Mammary epithelial cell (primary cell): ENCODE measurements at regions of chr1 and their contacts with region 1.

Region 1: GRCh38 chr1:27392096-27392777 is at the start of gene GPR3:
- DNase-seq: peak; percentile 84
- H3K4me3 ChIP-seq: peak within 1 kb of the TSS; percentile 54 to 73 (median 64)
- H3K27ac ChIP-seq: peak within 1 kb of the TSS; percentile 86
- H3K4me1 ChIP-seq: peaks cover 26% of the 10 kb centered on the region
- H3K27me3 ChIP-seq: no peaks in the 10 kb centered on the region
- CTCF ChIP-seq: peak in 1 of 2 donors; percentile 54
- total RNA-seq, gene GPR3: 0.50 to 2.3 TPM

Region 2: GRCh38 chr1:27102707-27103491 is 289.3 kb before region 1 on chr1:
- CTCF ChIA-PET with region 1: no interaction called
- dilution Hi-C with region 1: no loop called
- in situ Hi-C with region 1: loop called in 1 of 2 experiments (anchors 25 kb)
- intact Hi-C with region 1: loop called (anchors 2 kb)
- DNase-seq: peak; percentile 45
- H3K4me3 ChIP-seq: no peak overlapping the region
- H3K27ac ChIP-seq: no peak overlapping the region
- H3K4me1 ChIP-seq: peaks cover 40% of the 10 kb centered on the region
- H3K27me3 ChIP-seq: no peaks in the 10 kb centered on the region
- CTCF ChIP-seq: peak; percentile 82 to 94

Region 3: GRCh38 chr1:27192039-27192529 is 200.2 kb before region 1 on chr1:
- CTCF ChIA-PET with region 1: no interaction called
- dilution Hi-C with region 1: no loop called
- in situ Hi-C with region 1: no loop called
- intact Hi-C with region 1: loop called (anchors 10 kb)
- DNase-seq: peak; percentile 41
- H3K4me3 ChIP-seq: no peak overlapping the region
- H3K27ac ChIP-seq: no peak overlapping the region
- H3K4me1 ChIP-seq: peaks cover 14% of the 10 kb centered on the region
- H3K27me3 ChIP-seq: no peaks in the 10 kb centered on the region
- CTCF ChIP-seq: no peak

Region 4: GRCh38 chr1:27300341-27301051 is 91.7 kb before region 1 on chr1:
- CTCF ChIA-PET with region 1: interaction called, 3 read pairs
- dilution Hi-C with region 1: no loop called
- in situ Hi-C with region 1: loop called (anchors 5 kb)
- intact Hi-C with region 1: loop called (anchors 1 kb)
- DNase-seq: peak; percentile 73
- H3K4me3 ChIP-seq: no peak overlapping the region
- H3K27ac ChIP-seq: peak overlapping the region; percentile 86
- H3K4me1 ChIP-seq: peaks cover 28% of the 10 kb centered on the region
- H3K27me3 ChIP-seq: no peaks in the 10 kb centered on the region
- CTCF ChIP-seq: peak; percentile 96 to 98

Region 5: DNA sequence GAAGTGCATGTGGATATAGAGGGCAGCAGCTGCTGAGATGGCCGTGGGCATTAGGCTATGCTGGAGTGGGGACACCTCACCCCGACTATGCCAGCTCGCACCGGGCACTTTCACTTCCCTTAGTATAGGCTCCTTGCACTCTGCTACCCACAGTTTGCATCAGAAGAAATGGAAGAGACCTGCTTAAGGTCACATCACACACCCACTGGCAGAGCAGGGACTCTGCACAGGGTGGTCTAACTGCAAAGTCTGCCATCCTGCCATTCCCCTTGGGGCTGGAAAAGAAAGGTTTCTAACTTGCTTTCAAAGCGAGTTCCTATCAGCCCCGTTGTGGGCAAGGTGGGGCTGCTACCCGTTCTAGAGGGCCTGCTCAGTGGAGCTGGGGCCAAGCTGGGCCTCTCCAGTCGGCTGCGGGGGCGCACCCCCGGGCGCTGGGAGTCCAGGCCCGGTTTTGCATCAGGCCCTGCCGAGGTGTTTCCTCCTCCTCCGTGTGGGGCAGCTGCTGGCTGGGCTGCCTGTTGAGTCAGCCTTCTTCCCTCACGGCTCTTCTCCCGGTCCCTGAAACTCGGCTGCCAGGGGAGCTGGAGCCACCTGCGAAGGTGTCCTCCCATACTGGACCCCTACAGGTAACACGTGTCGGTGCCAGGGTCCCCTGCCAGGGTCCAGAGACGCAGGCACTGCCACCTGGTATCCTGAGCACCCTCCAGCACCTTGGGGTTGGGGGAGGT is 50.5 kb before region 1 on chr1 and contains the start of gene SYTL1:
- CTCF ChIA-PET with region 1: no interaction called
- dilution Hi-C with region 1: loop called (anchors 5 kb)
- in situ Hi-C with region 1: no loop called
- intact Hi-C with region 1: no loop called
- DNase-seq: peak; percentile 86
- H3K4me3 ChIP-seq: peak within 1 kb of the TSS; percentile 79 to 90 (median 83)
- H3K27ac ChIP-seq: peak within 1 kb of the TSS; percentile 86
- H3K4me1 ChIP-seq: peaks cover 32% of the 10 kb centered on the region
- H3K27me3 ChIP-seq: no peaks in the 10 kb centered on the region
- CTCF ChIP-seq: no peak
- total RNA-seq, gene SYTL1: 63.3 to 91.8 TPM

Region 6: GRCh38 chr1:27365372-27366112 is 26.7 kb before region 1 on chr1:
- CTCF ChIA-PET with region 1: interaction called, 29 read pairs
- dilution Hi-C with region 1: no loop called
- in situ Hi-C with region 1: no loop called
- intact Hi-C with region 1: loop called (anchors 1 kb)
- DNase-seq: peak; percentile 89
- H3K4me3 ChIP-seq: peak overlapping the region; percentile 68 to 86 (median 85)
- H3K27ac ChIP-seq: peak overlapping the region; percentile 90
- H3K4me1 ChIP-seq: peaks cover 18% of the 10 kb centered on the region
- H3K27me3 ChIP-seq: no peaks in the 10 kb centered on the region
- CTCF ChIP-seq: no peak